ENCODE measurements at regions of chr6 and their contacts with region 1.

Region 1: DNA sequence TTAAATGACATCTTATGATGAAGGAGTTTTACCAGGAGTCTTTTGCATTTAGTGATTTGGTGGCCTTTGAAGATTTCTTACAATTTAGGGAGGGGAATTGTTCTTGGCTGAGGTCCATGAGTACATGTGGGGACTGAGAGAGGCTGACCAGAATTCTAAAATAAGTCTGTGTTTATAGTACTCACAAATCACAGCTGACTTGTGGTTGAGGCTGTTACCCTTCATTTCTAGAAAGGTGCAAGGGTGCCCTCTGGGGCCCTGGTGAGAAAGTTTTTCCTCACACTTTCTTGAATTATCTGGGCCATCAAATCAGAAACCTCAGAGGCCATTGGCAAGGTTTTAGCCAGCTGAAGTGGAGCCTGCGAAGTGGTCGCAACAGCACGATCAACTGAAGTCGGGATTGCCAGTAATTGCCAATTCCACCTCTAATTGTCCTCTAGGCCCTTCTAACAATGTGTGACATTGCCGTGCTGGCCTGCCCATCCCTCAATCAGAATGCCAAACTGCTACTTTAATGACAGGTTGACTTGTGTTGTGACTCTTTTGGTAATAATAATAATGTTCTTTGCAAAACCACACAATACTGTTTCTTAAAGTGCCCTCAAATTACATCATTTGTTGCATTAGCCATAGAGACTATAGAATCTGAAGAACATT is 221.6 kb downstream of the OGFRL1 start:
- DNase-seq: peak; percentile 49 to 77
- H3K4me3 ChIP-seq: no peak overlapping the region
- H3K27ac ChIP-seq: peak overlapping the region in 1 of 2 donors; percentile 26
- H3K4me1 ChIP-seq: peaks cover 0 to 30% (median 2%) of the 10 kb centered on the region in 4 donors
- H3K27me3 ChIP-seq: no peaks in the 10 kb centered on the region
- CTCF ChIP-seq: peak; percentile 78 to 89

Region 2: GRCh38 chr6:71383901-71384489 is 126.2 kb before region 1 on chr6:
- intact Hi-C with region 1: loop called (anchors 5 kb)
- DNase-seq: no peak
- H3K4me3 ChIP-seq: no peak overlapping the region
- H3K27ac ChIP-seq: peak overlapping the region in 1 of 2 donors; percentile 35
- H3K4me1 ChIP-seq: peaks cover 0 to 39% (median 17%) of the 10 kb centered on the region in 4 donors
- H3K27me3 ChIP-seq: no peaks in the 10 kb centered on the region
- CTCF ChIP-seq: peak; percentile 71 to 77

Region 3: GRCh38 chr6:71855406-71855805 is 345.2 kb after region 1 on chr6:
- intact Hi-C with region 1: no loop called
- DNase-seq: no peak
- H3K4me3 ChIP-seq: no peak overlapping the region
- H3K27ac ChIP-seq: no peak overlapping the region
- H3K4me1 ChIP-seq: no peaks in the 10 kb centered on the region
- H3K27me3 ChIP-seq: no peaks in the 10 kb centered on the region
- CTCF ChIP-seq: no peak

Region 4: DNA sequence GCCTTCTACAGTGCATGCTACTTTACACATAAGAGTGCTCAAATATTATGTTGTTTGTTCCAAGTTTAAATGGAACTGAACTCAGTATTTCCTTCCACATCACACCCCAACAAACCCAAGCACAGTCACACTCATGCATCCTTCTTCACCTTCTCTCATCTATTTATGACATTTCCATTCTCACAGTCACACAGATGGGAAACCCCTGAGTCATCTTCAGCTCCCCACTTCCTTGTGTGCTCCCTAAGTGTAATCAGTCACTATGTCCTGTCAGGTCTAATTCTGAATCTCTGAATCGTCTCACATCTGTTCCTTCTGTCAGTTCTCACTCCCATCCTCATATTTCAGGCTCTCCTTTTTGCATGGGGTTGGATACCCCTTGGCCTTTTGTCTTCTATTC is 472.2 kb after region 1 on chr6:
- intact Hi-C with region 1: no loop called
- DNase-seq: no peak
- H3K4me3 ChIP-seq: no peak overlapping the region
- H3K27ac ChIP-seq: no peak overlapping the region
- H3K4me1 ChIP-seq: no peaks in the 10 kb centered on the region
- H3K27me3 ChIP-seq: no peaks in the 10 kb centered on the region
- CTCF ChIP-seq: no peak